Psoas muscle (tissue), 8 donors: ENCODE measurements at regions of chr5 and their contacts with region 1.

Region 1: GRCh38 chr5:89445106-89445745 is 562.2 kb upstream of the MEF2C start:
- DNase-seq: no peak
- ATAC-seq: peak in 1 of 4 donors; percentile 43
- H3K4me3 ChIP-seq: no peak overlapping the region
- H3K27ac ChIP-seq: no peak overlapping the region
- H3K4me1 ChIP-seq: peaks cover 5% of the 10 kb centered on the region
- H3K27me3 ChIP-seq: no peaks in the 10 kb centered on the region
- CTCF ChIP-seq: no peak

Region 2: DNA sequence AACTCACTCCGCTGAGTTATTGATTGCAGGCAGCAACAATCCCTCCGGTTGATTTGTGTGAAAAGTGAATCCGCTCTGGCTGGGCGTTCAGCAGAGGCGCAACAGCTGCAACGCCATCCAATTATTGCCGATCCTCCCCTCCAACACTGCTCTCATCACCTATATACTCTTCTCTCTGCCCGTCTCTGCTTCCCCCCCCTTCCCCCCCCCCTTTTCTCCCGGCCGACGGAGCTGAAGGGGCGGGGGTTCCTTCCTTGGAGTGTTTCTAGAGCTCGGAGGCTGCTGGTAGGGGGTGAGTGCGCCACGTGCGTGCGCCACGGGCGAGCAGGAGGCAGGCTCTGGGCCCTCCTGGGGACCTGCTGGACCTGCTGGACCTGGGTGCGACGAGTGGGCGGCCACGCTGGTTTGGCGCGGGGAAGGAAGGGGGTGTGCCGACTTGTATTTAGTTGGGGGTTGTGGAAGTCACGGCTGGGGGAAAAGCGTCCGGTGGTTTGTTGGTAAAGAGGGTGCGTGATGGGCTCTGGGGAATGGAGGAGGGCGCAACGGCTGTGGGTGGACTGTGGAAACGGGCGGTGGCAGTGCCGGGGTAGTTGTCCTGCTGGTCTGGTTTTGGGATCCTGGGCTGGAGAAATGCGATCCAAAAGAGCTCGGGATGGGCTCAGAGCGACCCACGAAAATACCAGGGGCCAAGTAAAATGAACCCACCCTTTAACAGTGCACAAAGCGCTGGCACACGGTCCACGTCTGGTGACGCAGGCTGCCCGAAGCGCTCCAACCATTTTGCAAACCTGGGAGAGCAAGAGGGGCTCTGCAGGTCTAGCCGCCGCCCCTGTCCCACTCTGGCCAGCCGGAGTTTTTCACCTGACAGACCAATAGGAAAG is 555.8 kb before region 1 on chr5:
- intact Hi-C with region 1: loop called in 1 of 2 experiments (anchors 10 kb)
- DNase-seq: peak; percentile 72 to 86
- ATAC-seq: peak; percentile 74 to 89 (median 82)
- H3K4me3 ChIP-seq: peak overlapping the region; percentile 76
- H3K27ac ChIP-seq: peak overlapping the region; percentile 88
- H3K4me1 ChIP-seq: peaks cover 73% of the 10 kb centered on the region
- H3K27me3 ChIP-seq: no peaks in the 10 kb centered on the region
- CTCF ChIP-seq: no peak

Region 3: GRCh38 chr5:89570557-89570956 is 125.3 kb after region 1 on chr5:
- intact Hi-C with region 1: no loop called
- DNase-seq: no peak
- ATAC-seq: no peak
- H3K4me3 ChIP-seq: no peak overlapping the region
- H3K27ac ChIP-seq: no peak overlapping the region
- H3K4me1 ChIP-seq: no peaks in the 10 kb centered on the region
- H3K27me3 ChIP-seq: no peaks in the 10 kb centered on the region
- CTCF ChIP-seq: no peak